Endothelial cell of umbilical vein (primary cell): ENCODE measurements at regions of chr7 and their contacts with region 1.

Region 1: DNA sequence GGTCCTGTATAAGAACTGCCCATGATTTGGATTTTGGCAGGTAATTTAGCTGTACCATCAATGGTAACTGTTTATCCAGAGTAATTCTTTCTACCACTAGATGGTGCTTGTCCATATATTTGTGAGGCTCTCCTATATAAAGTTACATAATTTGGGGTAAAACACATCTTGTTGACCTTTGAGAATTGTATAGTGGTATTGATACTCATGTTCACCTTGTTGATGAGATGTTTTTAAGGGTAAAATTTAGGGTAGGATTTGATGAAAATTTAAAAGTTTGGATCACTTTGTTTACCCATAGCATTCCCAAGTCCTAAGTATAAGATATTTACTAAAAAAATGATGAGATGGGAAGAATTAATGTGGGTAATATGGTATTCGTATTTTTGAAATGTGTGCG is 31.6 kb downstream of the ST7 start:
- DNase-seq: peak; percentile 45
- H3K4me3 ChIP-seq: no peak overlapping the region
- H3K27ac ChIP-seq: no peak overlapping the region
- H3K4me1 ChIP-seq: no peaks in the 10 kb centered on the region
- H3K27me3 ChIP-seq: no peaks in the 10 kb centered on the region
- CTCF ChIP-seq: peak; percentile 29 to 44
- POLR2A ChIP-seq: no peak

Region 2: GRCh38 chr7:116929914-116930913 is 54.7 kb before region 1 on chr7:
- CTCF ChIA-PET with region 1: interaction called, 33 read pairs
- POLR2A ChIA-PET with region 1: no interaction called
- dilution Hi-C with region 1: no loop called
- intact Hi-C with region 1: loop called (anchors 1 kb)
- DNase-seq: peak; percentile 73
- H3K4me3 ChIP-seq: no peak overlapping the region
- H3K27ac ChIP-seq: no peak overlapping the region
- H3K4me1 ChIP-seq: peaks cover 3% of the 10 kb centered on the region
- H3K27me3 ChIP-seq: peaks cover 0 to 1% of the 10 kb centered on the region in 2 experiments
- CTCF ChIP-seq: peak; percentile 85 to 93
- POLR2A ChIP-seq: no peak

Region 3: DNA sequence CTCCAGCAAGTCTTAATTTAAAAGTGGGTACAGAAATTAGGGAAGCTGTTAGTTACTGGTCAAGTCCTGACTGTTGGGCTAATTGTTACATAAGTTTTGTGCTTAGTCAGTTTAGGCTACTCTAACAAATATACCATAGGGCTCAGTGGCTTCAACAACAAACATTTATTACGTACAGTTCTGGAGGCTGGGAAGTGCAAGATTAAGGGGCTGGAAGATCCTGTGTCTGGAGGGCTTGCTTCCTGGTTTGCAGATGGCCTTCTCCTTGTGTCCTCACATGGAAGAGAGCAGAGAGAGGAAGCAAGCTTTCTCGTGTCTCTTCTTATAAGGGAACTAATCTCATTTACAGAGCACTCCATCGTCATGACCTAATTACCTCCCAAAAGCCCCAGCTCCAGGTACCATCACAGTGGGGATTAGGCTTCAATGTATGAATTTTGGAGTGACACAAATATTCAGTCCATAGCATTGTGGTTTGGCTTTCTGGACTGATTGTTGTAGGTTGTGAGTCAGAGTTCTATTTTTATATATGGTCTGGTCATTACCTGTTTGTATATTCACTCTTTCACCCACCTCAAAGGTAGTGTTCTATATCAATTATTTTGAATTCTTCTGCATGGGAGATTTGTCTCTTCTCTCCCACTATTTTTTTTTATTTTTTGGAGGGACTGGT is 14.5 kb before region 1 on chr7:
- CTCF ChIA-PET with region 1: interaction called, 29 read pairs
- POLR2A ChIA-PET with region 1: no interaction called
- dilution Hi-C with region 1: no loop called
- intact Hi-C with region 1: no loop called
- DNase-seq: no peak
- H3K4me3 ChIP-seq: no peak overlapping the region
- H3K27ac ChIP-seq: no peak overlapping the region
- H3K4me1 ChIP-seq: no peaks in the 10 kb centered on the region
- H3K27me3 ChIP-seq: no peaks in the 10 kb centered on the region
- CTCF ChIP-seq: no peak
- POLR2A ChIP-seq: no peak

Region 4: GRCh38 chr7:117034851-117035464 is 50.0 kb after region 1 on chr7:
- CTCF ChIA-PET with region 1: interaction called, 17 read pairs
- POLR2A ChIA-PET with region 1: no interaction called
- dilution Hi-C with region 1: no loop called
- intact Hi-C with region 1: loop called (anchors 1 kb)
- DNase-seq: peak; percentile 90
- H3K4me3 ChIP-seq: no peak overlapping the region
- H3K27ac ChIP-seq: peak overlapping the region; percentile 46
- H3K4me1 ChIP-seq: peaks cover 19% of the 10 kb centered on the region
- H3K27me3 ChIP-seq: no peaks in the 10 kb centered on the region
- CTCF ChIP-seq: no peak
- POLR2A ChIP-seq: no peak

Region 5: DNA sequence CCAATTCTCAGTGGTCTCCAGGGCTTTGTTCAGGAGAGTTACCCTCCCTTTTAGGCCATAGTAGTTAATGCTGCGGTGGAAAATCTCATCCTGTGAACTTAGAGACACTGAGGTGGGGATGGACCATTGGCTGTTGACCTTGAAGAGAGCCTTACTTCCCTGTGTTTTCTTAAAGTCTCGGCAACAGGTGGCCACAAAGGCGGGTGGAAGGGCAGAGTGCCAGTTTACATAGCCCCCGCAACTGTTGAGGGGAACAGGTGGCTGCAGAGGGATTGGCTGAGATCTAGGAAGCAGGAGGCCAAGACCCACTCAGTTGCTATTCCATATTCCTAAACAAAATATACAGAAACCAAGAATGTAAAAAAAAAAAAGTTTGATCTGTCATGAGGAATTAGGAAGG is 129.0 kb after region 1 on chr7:
- CTCF ChIA-PET with region 1: interaction called, 700 read pairs
- POLR2A ChIA-PET with region 1: interaction called, 5 read pairs
- dilution Hi-C with region 1: no loop called
- intact Hi-C with region 1: loop called (anchors 1 kb)
- DNase-seq: no peak
- H3K4me3 ChIP-seq: no peak overlapping the region
- H3K27ac ChIP-seq: no peak overlapping the region
- H3K4me1 ChIP-seq: peaks cover 19% of the 10 kb centered on the region
- H3K27me3 ChIP-seq: no peaks in the 10 kb centered on the region
- CTCF ChIP-seq: no peak
- POLR2A ChIP-seq: no peak

Region 6: GRCh38 chr7:117347962-117348672 is 363.2 kb after region 1 on chr7:
- CTCF ChIA-PET with region 1: no interaction called
- POLR2A ChIA-PET with region 1: no interaction called
- dilution Hi-C with region 1: no loop called
- intact Hi-C with region 1: no loop called
- DNase-seq: no peak
- H3K4me3 ChIP-seq: no peak overlapping the region
- H3K27ac ChIP-seq: no peak overlapping the region
- H3K4me1 ChIP-seq: no peaks in the 10 kb centered on the region
- H3K27me3 ChIP-seq: peaks cover 2 to 10% of the 10 kb centered on the region in 2 experiments
- CTCF ChIP-seq: no peak
- POLR2A ChIP-seq: no peak

Region 7: DNA sequence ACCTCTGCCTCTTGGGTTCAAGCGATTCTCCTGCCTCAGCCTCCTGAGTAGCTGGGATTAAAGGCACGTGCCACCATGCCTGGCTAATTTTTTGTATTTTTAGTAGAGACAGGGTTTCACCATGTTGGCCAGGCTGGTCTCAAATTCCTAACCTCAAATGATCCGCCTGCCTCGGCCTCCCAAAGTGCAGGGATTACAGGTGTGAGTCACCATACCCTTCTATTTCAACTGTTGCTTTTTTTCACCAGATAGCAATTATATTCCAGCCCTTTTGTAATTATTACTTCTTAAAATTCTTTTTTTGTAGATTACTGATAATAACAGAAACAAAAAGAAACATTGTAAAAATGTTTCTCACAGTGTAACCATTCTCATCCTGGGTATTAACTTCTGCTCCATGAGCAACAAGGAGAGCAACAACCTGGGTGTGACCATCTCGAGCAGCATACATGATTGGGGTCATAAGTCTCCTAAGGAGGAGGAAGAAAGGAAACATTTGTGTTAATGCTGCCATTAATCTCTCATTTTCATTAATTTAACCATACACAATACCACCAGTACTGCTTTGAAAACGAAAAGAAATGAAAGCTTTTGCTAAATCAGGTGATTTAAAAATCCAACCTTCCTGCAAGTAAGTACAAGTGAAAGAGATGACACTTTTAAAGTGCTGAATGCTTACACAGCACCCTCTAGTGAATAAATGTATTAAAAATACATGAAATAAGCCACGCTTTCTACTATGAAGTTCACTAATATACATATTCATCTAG is 400.6 kb after region 1 on chr7:
- CTCF ChIA-PET with region 1: interaction called, 15 read pairs
- POLR2A ChIA-PET with region 1: no interaction called
- dilution Hi-C with region 1: no loop called
- intact Hi-C with region 1: loop called (anchors 2 kb)
- DNase-seq: peak; percentile 47
- H3K4me3 ChIP-seq: no peak overlapping the region
- H3K27ac ChIP-seq: no peak overlapping the region
- H3K4me1 ChIP-seq: no peaks in the 10 kb centered on the region
- H3K27me3 ChIP-seq: no peaks in the 10 kb centered on the region
- CTCF ChIP-seq: peak in 1 of 2 donors; percentile 10
- POLR2A ChIP-seq: no peak